ENCODE measurements at regions of chr1 and their contacts with region 1.

Region 1: GRCh38 chr1:180502360-180503273 is at the start of gene ACBD6:
- DNase-seq: peak; percentile 83
- ATAC-seq: peak; percentile 80
- H3K4me3 ChIP-seq: peak within 1 kb of the TSS; percentile 95
- H3K27ac ChIP-seq: peak within 1 kb of the TSS; percentile 98
- H3K4me1 ChIP-seq: peaks cover 18% of the 10 kb centered on the region
- H3K27me3 ChIP-seq: no peaks in the 10 kb centered on the region
- CTCF ChIP-seq: no peak; the same call in 1 of the 2 replicates
- POLR2A ChIP-seq: peak; percentile 73
- RAD21 ChIP-seq: no peak
- total RNA-seq, gene ACBD6: 52.5 and 83.3 TPM in 2 replicates

Region 2: DNA sequence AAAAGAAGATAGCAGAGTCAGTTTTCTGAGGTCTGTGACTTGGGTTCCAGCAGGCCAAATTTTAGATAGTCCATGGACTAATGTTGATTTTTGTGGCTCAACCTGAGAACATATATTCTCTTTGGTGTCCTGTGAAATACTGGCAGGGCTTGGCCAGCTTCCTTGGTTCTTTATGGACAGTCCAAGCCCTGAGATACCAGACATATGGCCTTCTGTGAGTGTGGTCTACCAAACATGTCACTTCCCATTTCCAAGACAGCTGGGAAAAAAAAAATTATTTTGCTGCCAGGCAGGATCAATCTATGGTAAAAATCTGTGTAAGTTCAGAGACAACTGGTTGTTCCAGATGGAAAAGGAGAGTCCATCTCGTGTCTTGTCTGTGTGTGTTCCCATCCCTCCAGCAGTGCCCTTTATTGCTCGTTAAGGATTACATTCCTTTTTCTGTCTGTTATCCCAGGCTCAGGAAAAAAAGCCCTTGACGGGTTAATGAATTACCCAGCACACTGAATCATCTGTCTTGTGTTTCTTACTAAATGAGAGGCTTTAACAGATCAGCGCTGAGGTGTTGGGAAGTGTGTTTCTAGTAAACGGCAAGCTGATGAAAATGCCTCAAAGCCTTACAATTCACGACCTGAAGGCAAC is 95.8 kb after region 1 on chr1:
- CTCF ChIA-PET with region 1: no interaction called
- POLR2A ChIA-PET with region 1: no interaction called
- dilution Hi-C with region 1: no loop called
- in situ Hi-C with region 1: no loop called
- intact Hi-C with region 1: no loop called
- DNase-seq: no peak
- ATAC-seq: no peak
- H3K4me3 ChIP-seq: no peak overlapping the region
- H3K27ac ChIP-seq: no peak overlapping the region
- H3K4me1 ChIP-seq: no peaks in the 10 kb centered on the region
- H3K27me3 ChIP-seq: no peaks in the 10 kb centered on the region
- CTCF ChIP-seq: no peak
- POLR2A ChIP-seq: no peak
- RAD21 ChIP-seq: no peak

Region 3: GRCh38 chr1:180631766-180632325 is 129.2 kb after region 1 on chr1 and contains the start of gene XPR1:
- CTCF ChIA-PET with region 1: no interaction called
- POLR2A ChIA-PET with region 1: no interaction called
- dilution Hi-C with region 1: no loop called
- in situ Hi-C with region 1: no loop called
- intact Hi-C with region 1: no loop called
- DNase-seq: peak; percentile 99
- ATAC-seq: peak; percentile 99
- H3K4me3 ChIP-seq: peak within 1 kb of the TSS; percentile 94
- H3K27ac ChIP-seq: peak within 1 kb of the TSS; percentile 89
- H3K4me1 ChIP-seq: no peaks in the 10 kb centered on the region
- H3K27me3 ChIP-seq: no peaks in the 10 kb centered on the region
- CTCF ChIP-seq: peak; percentile 37
- POLR2A ChIP-seq: peak; percentile 74
- RAD21 ChIP-seq: peak; percentile 47
- total RNA-seq, gene XPR1: 25.1 and 25.3 TPM in 2 replicates

Region 4: GRCh38 chr1:180680558-180681144 is 178.0 kb after region 1 on chr1:
- CTCF ChIA-PET with region 1: no interaction called
- POLR2A ChIA-PET with region 1: interaction called, 12 read pairs
- dilution Hi-C with region 1: no loop called
- in situ Hi-C with region 1: no loop called
- intact Hi-C with region 1: no loop called
- DNase-seq: peak; percentile 82
- ATAC-seq: no peak; the same call in 1 of the 2 replicates
- H3K4me3 ChIP-seq: no peak overlapping the region
- H3K27ac ChIP-seq: no peak overlapping the region
- H3K4me1 ChIP-seq: no peaks in the 10 kb centered on the region; the same call in 1 of the 2 replicates
- H3K27me3 ChIP-seq: no peaks in the 10 kb centered on the region
- CTCF ChIP-seq: no peak
- POLR2A ChIP-seq: no peak
- RAD21 ChIP-seq: no peak